Activated T-helper 1 cell treated with anti-CD3 and anti-CD28 coated beads, Interleukin-12 subunit alpha, Interleukin-12 subunit beta, Interleukin-2, Interleukin-4 antibody, amounts not matched to agents 30 ng/mL and 10 ng/mL and 1 ng/mL, durations not matched to agents 14 hours and 24 hours and 36 hours (primary cell): ENCODE measurements at regions of chr17 and their contacts with region 1.

Region 1: GRCh38 chr17:6651357-6651918 is at the starts of genes C17orf100 and MED31:
- DNase-seq: peak; percentile 95
- H3K4me3 Mint-ChIP-seq: peak within 1 kb of the TSS; percentile 100
- H3K27ac Mint-ChIP-seq: peak within 1 kb of the TSS; percentile 100
- H3K4me1 Mint-ChIP-seq: peaks cover 69% of the 10 kb centered on the region
- H3K27me3 Mint-ChIP-seq: peaks cover 17% of the 10 kb centered on the region
- total RNA-seq, gene C17orf100: 1.6 and 1.7 TPM in 2 replicates
- total RNA-seq, gene MED31: 24.3 and 28.4 TPM in 2 replicates

Region 2: DNA sequence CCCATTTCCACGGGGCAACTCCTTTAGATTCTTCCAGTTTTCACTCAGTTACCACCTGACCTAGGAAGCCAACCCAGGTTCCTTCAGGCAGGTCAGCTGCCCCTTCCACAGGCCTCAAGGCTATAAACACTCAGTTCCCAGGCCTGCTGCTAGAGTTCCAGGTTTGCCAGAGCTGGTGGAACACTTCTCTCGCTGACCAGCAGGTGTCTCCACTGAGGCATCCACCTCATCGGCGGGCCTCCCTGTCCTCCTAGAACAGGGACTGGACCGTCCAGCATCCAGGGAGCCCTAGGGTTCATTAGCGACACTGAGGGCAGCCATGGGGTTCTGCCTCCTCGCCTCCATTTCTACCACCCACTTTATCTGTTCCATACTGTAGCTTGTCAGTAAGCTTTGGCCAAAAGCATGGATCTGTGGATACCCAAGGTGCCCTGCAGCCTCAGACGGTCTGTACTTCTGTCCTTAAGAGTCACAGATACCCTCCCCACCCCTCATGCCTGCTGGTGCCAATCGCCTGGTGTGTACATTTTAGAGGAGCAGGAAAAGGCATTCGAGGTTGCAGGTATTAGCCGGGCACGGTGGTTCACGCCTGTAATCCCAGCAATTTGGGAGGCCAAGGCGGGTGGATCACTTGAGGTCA is 178.2 kb before region 1 on chr17:
- intact Hi-C with region 1: loop called (anchors 1 kb)
- DNase-seq: peak; percentile 57
- H3K4me3 Mint-ChIP-seq: no peak overlapping the region
- H3K27ac Mint-ChIP-seq: no peak overlapping the region
- H3K4me1 Mint-ChIP-seq: no peaks in the 10 kb centered on the region
- H3K27me3 Mint-ChIP-seq: no peaks in the 10 kb centered on the region

Region 3: GRCh38 chr17:6716736-6717135 is 65.3 kb after region 1 on chr17:
- intact Hi-C with region 1: no loop called
- DNase-seq: no peak
- H3K4me3 Mint-ChIP-seq: no peak overlapping the region
- H3K27ac Mint-ChIP-seq: no peak overlapping the region
- H3K4me1 Mint-ChIP-seq: no peaks in the 10 kb centered on the region
- H3K27me3 Mint-ChIP-seq: peaks cover 48% of the 10 kb centered on the region

Region 4: GRCh38 chr17:6831661-6832263 is 180.3 kb after region 1 on chr17 and contains the start of gene TEKT1:
- intact Hi-C with region 1: loop called (anchors 5 kb)
- DNase-seq: peak; percentile 66
- H3K4me3 Mint-ChIP-seq: peak within 1 kb of the TSS; percentile 71
- H3K27ac Mint-ChIP-seq: peak within 1 kb of the TSS; percentile 23
- H3K4me1 Mint-ChIP-seq: peaks cover 9% of the 10 kb centered on the region
- H3K27me3 Mint-ChIP-seq: peaks cover 59% of the 10 kb centered on the region
- total RNA-seq, gene TEKT1: not detected in 2 replicates

Region 5: GRCh38 chr17:7014261-7014994 is 363.0 kb after region 1 on chr17:
- intact Hi-C with region 1: loop called (anchors 2 kb)
- DNase-seq: peak; percentile 98
- H3K4me3 Mint-ChIP-seq: peak overlapping the region; percentile 99
- H3K27ac Mint-ChIP-seq: peak overlapping the region; percentile 99
- H3K4me1 Mint-ChIP-seq: peaks cover 68% of the 10 kb centered on the region
- H3K27me3 Mint-ChIP-seq: peaks cover 6% of the 10 kb centered on the region